Caco-2 (cell line): ENCODE measurements at regions of chr10 and their contacts with region 1.

Region 1: DNA sequence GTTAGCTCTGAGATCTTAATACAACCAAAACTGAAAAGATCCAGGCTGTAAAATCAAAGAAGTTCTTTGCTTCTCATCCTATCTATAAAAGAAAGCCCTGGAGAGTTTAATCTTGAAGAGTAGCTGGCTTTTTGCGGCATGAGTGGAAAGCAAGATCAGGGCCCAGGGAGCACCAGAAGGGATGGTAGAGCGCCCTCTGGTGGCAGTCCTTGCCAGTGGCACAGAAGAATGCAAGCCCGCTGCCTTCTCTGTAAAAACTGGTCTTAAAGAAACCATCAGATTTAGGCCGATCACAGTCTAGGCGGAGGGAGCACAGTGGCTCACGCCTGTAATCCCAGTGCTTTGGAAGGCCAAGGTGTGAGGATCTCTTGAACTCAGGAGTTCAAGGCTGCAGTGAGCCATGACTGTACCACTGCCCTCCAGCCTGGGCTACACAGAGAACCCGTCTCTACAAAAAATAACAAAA is 35.6 kb downstream of the CPN1 start:
- DNase-seq: peak; percentile 84 to 87
- H3K4me3 ChIP-seq: no peak overlapping the region
- H3K4me3 Mint-ChIP-seq: no peak overlapping the region
- H3K27ac Mint-ChIP-seq: no peak overlapping the region
- H3K4me1 ChIP-seq: 0 out of 2 replicates have a peak, but pooled peaks cover 11% of the 10 kb centered on the region
- H3K4me1 Mint-ChIP-seq: peaks cover 7% of the 10 kb centered on the region
- H3K27me3 ChIP-seq: no peaks in the 10 kb centered on the region
- H3K27me3 Mint-ChIP-seq: no peaks in the 10 kb centered on the region
- CTCF ChIP-seq: peak; percentile 95 to 97

Region 2: DNA sequence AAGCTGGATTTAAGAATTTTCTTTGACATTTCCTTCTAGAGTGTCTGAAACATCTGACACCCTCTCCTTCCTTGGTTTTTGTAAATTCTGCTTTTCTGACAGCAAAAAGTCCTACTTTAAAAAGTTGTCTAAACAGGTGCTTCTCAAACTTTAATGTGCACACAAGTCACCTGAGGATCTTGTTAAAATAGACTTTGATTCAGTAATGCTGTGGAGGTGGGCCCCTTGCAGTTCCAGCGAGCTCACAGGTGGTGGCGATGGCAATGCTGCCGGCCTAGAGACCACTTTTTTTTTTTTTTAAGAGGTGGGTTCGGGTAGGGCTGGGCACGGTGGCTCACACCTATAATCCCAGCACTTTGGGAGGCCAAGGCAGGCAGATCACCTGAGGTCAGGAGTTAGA is 186.5 kb before region 1 on chr10:
- CTCF ChIA-PET with region 1: interaction called, 10 read pairs
- POLR2A ChIA-PET with region 1: no interaction called
- intact Hi-C with region 1: no loop called
- DNase-seq: peak; percentile 51 to 56
- H3K4me3 ChIP-seq: no peak overlapping the region
- H3K4me3 Mint-ChIP-seq: no peak overlapping the region
- H3K27ac Mint-ChIP-seq: no peak overlapping the region
- H3K4me1 ChIP-seq: no peaks in the 10 kb centered on the region
- H3K4me1 Mint-ChIP-seq: peaks cover 21% of the 10 kb centered on the region
- H3K27me3 ChIP-seq: no peaks in the 10 kb centered on the region
- H3K27me3 Mint-ChIP-seq: no peaks in the 10 kb centered on the region
- CTCF ChIP-seq: peak; percentile 46 to 62

Region 3: DNA sequence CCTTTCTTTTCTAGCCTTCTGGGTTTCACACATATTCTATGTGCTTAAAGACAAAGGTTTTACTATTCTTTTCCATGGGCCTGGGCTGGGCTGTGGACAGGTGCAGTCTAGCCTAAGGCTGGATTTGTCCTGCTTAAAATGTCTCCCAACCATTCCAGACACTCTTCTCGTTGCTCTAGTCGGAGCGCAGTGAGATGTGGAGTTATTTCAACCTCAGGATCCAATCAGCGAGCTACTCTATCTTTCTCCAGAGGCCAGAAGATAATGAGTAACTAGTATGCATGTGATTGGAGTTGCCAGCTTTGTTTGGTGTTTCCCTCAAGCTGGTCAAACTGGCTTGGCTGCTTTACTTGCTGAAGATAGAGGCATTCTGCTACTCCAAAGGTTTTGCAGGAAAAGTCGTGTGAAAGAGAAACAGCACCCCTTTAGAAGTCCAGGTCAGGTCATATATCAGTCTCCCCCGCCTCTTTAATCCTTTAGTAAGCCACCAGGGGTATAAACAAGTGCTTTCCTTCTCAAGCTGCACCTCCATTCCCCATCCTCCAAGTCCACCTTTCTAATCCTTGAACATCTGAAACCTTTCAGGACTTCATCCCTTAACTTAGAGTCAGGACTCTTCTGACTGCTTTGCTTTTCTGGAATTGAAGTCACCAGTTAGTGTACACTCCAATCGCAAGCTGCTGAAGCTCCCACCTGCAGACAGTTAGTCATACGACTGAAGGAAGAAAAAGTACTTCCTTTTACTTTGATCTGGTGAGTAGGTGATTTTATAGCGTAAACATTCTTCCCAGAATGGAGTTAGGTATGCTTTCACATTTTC is 115.1 kb before region 1 on chr10:
- CTCF ChIA-PET with region 1: interaction called, 11 read pairs
- POLR2A ChIA-PET with region 1: no interaction called
- intact Hi-C with region 1: no loop called
- DNase-seq: peak; percentile 94 to 95
- H3K4me3 ChIP-seq: peak overlapping the region; percentile 56
- H3K4me3 Mint-ChIP-seq: peak overlapping the region; percentile 89
- H3K27ac Mint-ChIP-seq: peak overlapping the region; percentile 89
- H3K4me1 ChIP-seq: peaks cover 32% of the 10 kb centered on the region
- H3K4me1 Mint-ChIP-seq: peaks cover 27% of the 10 kb centered on the region
- H3K27me3 ChIP-seq: no peaks in the 10 kb centered on the region
- H3K27me3 Mint-ChIP-seq: no peaks in the 10 kb centered on the region
- CTCF ChIP-seq: peak in 1 of 2 experiments; percentile 9

Region 4: GRCh38 chr10:100009793-100010676 is 36.0 kb before region 1 on chr10 and contains the start of gene DNMBP:
- CTCF ChIA-PET with region 1: interaction called, 5 read pairs
- POLR2A ChIA-PET with region 1: no interaction called
- intact Hi-C with region 1: loop called (anchors 2 kb)
- DNase-seq: peak; percentile 83 to 91
- H3K4me3 ChIP-seq: peak within 1 kb of the TSS; percentile 90
- H3K4me3 Mint-ChIP-seq: peak within 1 kb of the TSS; percentile 94
- H3K27ac Mint-ChIP-seq: peak within 1 kb of the TSS; percentile 53
- H3K4me1 ChIP-seq: peaks cover 34% of the 10 kb centered on the region
- H3K4me1 Mint-ChIP-seq: peaks cover 35% of the 10 kb centered on the region
- H3K27me3 ChIP-seq: no peaks in the 10 kb centered on the region
- H3K27me3 Mint-ChIP-seq: no peaks in the 10 kb centered on the region
- CTCF ChIP-seq: peak; percentile 48 to 63
- total RNA-seq, gene DNMBP: 30.6 and 31.0 TPM in 2 replicates

Region 5: DNA sequence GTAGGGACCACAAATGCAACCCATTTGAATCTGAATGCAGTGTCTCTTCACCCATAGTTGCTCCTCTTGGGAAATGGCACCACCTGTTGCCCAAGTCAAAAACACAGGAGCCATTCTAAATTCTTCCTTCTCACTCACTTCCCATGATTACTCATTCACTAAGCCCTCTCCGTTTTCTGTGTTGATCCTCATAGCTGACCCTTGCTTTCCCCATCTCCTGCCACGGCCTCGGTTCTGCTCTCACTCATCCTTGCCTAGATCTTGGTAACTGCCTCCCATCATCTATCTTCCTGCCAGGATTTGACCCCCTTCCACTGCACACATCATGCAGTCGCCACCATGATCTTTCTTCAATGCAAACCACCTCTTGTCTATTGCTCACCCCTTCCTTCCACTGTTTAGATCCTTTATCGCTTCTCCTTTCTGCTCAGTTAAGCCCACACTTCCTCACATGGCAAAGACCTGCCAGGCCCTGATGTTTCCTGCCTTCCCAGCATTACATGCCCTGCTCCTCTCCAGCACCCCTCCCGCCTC is 54.7 kb after region 1 on chr10:
- CTCF ChIA-PET with region 1: interaction called, 3 read pairs
- POLR2A ChIA-PET with region 1: no interaction called
- intact Hi-C with region 1: loop called (anchors 1 kb)
- DNase-seq: peak in 1 of 2 experiments; percentile 58
- H3K4me3 ChIP-seq: no peak overlapping the region
- H3K4me3 Mint-ChIP-seq: no peak overlapping the region
- H3K27ac Mint-ChIP-seq: no peak overlapping the region
- H3K4me1 ChIP-seq: peaks cover 19% of the 10 kb centered on the region
- H3K4me1 Mint-ChIP-seq: peaks cover 19% of the 10 kb centered on the region
- H3K27me3 ChIP-seq: no peaks in the 10 kb centered on the region
- H3K27me3 Mint-ChIP-seq: no peaks in the 10 kb centered on the region
- CTCF ChIP-seq: peak; percentile 40 to 72